A549 (cell line): ENCODE measurements at regions of chr19 and their contacts with region 1.

Region 1: DNA sequence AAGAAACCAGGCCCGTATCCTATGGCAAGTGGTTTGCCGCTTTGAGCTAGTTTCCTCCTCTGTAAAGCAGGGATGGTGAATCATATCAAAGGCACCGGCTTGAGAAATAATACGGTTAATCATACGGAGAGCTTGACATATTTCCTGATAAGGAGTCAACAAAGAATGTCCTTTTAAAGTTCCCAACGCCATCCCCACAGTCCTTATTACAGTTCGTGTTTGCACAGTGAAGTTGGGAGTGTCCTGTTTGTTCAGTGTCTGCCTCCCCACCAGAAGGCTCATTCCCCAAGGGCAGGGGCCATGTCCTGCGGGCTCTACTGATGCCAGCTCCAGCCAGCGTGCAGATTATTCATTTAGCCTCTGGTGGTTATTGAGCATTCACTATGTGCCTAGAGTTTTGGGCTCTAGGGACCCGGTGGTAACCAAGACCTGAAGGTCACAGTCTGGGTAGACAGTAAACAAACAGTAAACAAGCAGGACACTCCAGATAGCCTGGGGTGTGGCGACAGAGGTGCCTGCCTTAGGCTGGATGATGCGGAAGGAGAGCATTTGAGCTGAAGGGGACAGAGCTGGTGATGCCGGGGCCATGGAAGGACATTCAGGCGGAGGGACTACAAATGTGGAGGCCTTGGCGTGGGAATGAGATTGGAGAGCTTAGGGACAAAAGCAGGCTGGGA is 6.4 kb downstream of the GRAMD1A start:
- DNase-seq: peak; percentile 98 to 100
- ATAC-seq: peak; percentile 84 to 92
- H3K4me3 ChIP-seq: peak overlapping the region; percentile 25
- H3K27ac ChIP-seq: peak overlapping the region; percentile 93 to 94
- H3K4me1 ChIP-seq: peaks cover 79% of the 10 kb centered on the region
- CTCF ChIP-seq: peak; percentile 24; the same call in 2 of the 3 replicates
- EP300 ChIP-seq: peak; percentile 97
- POLR2A ChIP-seq: no peak
- RAD21 ChIP-seq: peak; percentile 27 to 71

Region 2: DNA sequence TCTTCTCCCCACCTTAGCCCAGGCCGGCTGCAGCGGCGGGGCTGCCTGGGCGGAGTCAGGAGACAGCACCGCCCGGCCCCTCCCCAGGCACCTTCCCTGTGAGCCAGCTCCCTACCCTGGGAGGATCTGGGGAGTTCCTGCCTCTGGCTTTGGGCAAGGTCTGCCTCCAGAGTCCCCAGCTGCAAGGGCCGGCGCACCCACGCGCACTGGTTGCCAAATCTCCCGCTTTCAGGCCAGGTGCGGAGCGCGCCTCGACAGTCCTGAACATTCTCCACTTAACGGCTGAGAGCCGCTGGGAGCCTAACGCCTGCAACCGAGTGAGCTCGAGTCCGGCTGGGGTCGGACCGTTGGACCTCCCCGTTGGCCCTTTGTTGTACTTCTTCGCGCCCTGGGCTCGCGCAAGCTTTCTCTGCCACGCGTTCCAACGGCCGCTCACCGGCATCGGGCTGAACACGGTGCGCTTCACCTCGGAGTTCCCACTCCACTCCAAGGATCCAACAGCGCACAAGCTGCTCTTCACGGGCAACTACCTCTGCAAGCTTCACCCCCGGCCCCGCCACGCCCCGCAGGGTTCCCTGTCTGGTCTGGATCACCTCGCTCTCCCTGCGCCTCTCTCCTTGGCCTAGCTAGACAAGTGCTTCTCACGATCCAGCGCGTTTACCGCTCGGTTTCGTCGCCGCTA is 101.5 kb before region 1 on chr19:
- CTCF ChIA-PET with region 1: no interaction called
- POLR2A ChIA-PET with region 1: no interaction called
- DNase-seq: no peak
- ATAC-seq: peak in 1 of 2 experiments; percentile 23; a peak in 2 of 6 replicates
- H3K4me3 ChIP-seq: no peak overlapping the region
- H3K27ac ChIP-seq: no peak overlapping the region
- H3K4me1 ChIP-seq: no peaks in the 10 kb centered on the region
- CTCF ChIP-seq: no peak
- EP300 ChIP-seq: no peak
- POLR2A ChIP-seq: no peak
- RAD21 ChIP-seq: no peak

Region 3: DNA sequence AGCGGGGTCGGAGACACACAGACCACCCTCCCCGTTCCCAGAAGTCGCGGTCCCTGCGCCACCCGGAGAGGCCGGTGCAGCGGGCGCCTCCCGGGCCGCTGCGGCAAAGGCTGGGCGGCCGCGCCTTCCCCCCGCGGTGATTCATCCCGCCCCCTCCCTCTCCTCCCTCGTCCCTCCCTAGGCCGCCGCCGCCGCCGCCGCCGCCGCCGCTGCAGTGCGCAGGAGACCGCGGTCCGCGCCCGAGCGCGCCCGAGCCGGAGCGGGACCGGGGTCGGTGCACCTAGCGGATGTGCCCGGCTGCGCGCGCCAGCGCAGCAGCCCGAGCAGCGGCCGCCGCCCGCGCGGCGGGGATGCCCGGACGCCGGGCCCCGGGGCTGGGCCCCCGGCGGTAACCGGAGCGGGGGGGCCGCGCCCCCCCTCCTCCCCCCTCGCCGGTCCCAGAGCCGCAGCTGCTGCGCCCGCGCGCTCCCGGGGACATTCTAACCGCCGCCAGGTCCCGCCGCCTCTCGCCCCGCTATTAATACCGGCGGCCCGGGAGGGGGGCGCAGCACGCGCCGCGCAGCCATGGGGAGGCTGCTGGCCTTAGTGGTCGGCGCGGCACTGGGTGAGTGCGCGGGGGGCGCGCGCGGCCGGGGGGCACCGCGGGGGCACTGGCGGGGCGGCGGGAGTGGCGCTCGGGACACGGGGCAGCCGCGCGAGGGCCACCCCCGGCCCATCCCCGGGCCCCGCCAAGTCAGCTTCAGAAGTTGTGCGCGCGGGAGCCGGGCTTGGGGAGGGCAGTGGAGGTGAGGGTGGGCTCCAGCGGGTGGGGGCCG is 24.0 kb after region 1 on chr19 and contains the start of gene SCN1B:
- CTCF ChIA-PET with region 1: interaction called, 1,860 read pairs
- POLR2A ChIA-PET with region 1: interaction called, 45 read pairs
- DNase-seq: peak; percentile 85 to 91
- ATAC-seq: peak; percentile 54 to 82
- H3K4me3 ChIP-seq: peak within 1 kb of the TSS; percentile 73
- H3K27ac ChIP-seq: peak within 1 kb of the TSS; percentile 77 to 91
- H3K4me1 ChIP-seq: peaks cover 12% of the 10 kb centered on the region
- CTCF ChIP-seq: no peak; the same call in 1 of the 3 replicates
- EP300 ChIP-seq: no peak
- POLR2A ChIP-seq: no peak
- RAD21 ChIP-seq: no peak
- polyA plus RNA-seq, gene SCN1B: 11.0 and 12.8 TPM in 2 replicates

Region 4: DNA sequence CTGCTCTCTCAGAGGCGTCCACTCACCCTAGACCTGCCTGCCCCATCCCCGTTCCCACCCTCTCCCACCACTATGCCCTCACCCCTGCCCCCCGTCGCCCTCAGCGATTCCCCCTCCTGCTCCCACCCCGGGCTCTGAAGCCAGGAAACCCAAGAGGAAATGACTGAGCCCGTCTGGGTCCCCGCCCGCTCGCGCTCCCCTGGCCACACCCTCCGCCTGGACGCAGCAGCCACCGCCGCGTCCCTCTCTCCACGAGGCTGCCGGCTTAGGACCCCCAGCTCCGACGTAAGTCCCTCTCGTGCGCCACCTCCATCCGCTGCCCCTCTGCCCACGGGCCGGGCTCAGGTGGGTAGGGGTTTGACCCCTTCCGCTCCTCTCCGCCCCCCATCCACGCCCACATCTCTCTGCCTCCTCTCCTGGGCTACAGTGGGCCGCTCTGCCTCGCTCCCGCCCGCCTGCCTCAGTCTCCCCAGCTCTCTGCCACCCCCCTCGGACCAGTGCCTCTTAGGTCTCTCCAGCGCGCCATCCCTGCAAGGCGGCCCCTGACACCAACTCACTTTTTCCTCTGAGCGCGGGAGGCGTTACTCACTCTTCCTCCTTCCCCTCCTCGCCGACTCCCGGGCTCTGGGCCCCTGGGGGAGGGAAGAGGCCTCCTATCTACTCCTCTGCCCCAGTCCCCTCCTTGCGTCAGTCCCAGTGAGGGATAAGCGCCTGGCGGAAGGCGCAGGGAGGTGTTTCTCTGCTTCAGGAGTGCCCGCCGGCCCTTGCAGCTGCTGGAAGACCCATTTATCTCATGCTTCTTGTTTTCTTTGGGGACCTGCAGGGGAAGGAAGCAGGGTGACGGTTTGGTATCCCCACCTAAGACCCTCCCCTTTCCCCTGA is 148.3 kb after region 1 on chr19 and contains the start of gene FXYD5:
- CTCF ChIA-PET with region 1: no interaction called
- POLR2A ChIA-PET with region 1: no interaction called
- DNase-seq: peak; percentile 76 to 96
- ATAC-seq: peak; percentile 74 to 88
- H3K4me3 ChIP-seq: peak within 1 kb of the TSS; percentile 68
- H3K27ac ChIP-seq: peak within 1 kb of the TSS; percentile 79 to 90
- H3K4me1 ChIP-seq: peaks cover 9% of the 10 kb centered on the region; the same call in 1 of the 3 replicates
- CTCF ChIP-seq: no peak
- EP300 ChIP-seq: no peak
- POLR2A ChIP-seq: peak; percentile 69
- RAD21 ChIP-seq: no peak
- polyA plus RNA-seq, gene FXYD5: 70.8 and 77.3 TPM in 2 replicates

Region 5: DNA sequence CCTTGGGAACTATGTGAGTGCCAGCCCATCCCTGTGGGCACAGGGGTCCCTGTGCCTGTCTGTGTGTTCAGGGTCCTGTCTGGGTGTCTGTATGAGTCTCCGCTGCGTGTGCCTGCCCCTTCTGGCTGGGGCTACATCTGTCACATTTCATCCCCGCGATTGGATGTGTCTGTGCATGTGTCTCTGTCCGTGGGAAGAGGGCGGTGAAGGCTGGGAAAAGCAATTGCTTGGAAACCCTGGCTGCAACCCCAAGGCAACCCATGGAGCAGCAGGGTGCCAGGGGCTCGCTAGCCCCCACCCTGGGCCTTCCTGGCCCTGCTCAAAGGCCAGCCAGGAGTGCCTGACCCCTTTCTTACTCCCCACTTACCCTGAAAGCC is 286.9 kb after region 1 on chr19:
- CTCF ChIA-PET with region 1: no interaction called
- POLR2A ChIA-PET with region 1: no interaction called
- DNase-seq: no peak
- ATAC-seq: peak; percentile 17 to 20; a peak in 3 of 6 replicates
- H3K4me3 ChIP-seq: no peak overlapping the region
- H3K27ac ChIP-seq: no peak overlapping the region
- H3K4me1 ChIP-seq: no peaks in the 10 kb centered on the region
- CTCF ChIP-seq: no peak
- EP300 ChIP-seq: no peak
- POLR2A ChIP-seq: no peak
- RAD21 ChIP-seq: no peak